ENCODE measurements at regions of chr15 and their contacts with region 1.

Region 1: DNA sequence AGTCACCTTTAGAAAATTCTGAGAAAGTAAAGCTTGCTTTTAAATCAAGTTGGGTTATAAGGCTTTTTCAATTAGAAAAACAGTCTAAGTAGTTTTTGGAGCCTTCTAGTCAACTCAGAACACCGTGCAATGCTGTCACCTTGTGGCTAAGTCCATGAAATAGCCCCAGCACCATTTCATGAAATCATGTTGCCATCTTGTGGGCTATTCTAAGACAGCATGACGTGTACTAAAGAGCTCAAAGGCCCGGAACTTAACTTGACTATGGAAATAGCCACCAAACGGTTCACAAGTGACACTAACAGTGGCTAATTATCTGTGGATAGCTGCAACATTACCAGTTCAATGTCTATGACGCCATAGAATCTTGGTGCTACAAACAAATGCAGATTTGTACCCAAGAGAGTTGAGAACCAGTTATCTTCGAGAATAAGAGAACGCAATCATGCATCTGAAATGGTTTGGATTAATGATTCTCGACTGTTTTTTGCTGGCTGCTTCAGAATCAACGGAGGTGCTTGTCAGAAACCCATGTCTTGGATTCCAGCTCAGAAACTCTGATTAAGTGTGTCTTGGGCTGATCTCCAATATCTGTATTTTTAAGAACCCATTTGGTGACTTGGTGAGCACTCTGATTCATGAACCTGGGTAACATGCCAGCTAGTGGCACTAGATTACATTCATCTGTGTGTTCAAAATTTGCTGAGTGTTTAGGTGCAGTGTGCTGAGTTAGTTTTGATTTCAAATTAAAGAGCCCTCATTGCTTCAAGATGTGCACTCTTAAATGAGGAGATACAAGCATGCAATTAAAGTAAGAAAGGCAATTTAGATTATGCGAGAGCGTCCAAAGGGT is 111.2 kb upstream of the MCTP2 start:
- DNase-seq: peak; percentile 90 to 94 (median 93)
- H3K4me3 ChIP-seq: no peak overlapping the region
- H3K27ac ChIP-seq: no peak overlapping the region
- H3K4me1 ChIP-seq: peaks cover 0 to 29% (median 12%) of the 10 kb centered on the region in 4 experiments
- H3K27me3 ChIP-seq: no peaks in the 10 kb centered on the region

Region 2: GRCh38 chr15:93030430-93031105 is 1089.6 kb before region 1 on chr15:
- CTCF ChIA-PET with region 1: interaction called, 62 read pairs
- POLR2A ChIA-PET with region 1: no interaction called
- DNase-seq: peak; percentile 61 to 71 (median 66)
- H3K4me3 ChIP-seq: peak overlapping the region in 1 of 7 experiments; percentile 45
- H3K27ac ChIP-seq: no peak overlapping the region
- H3K4me1 ChIP-seq: peaks cover 0 to 59% (median 17%) of the 10 kb centered on the region in 4 experiments
- H3K27me3 ChIP-seq: no peaks in the 10 kb centered on the region

Region 3: GRCh38 chr15:93035953-93036800 is 1084.0 kb before region 1 on chr15:
- CTCF ChIA-PET with region 1: interaction called, 62 read pairs
- POLR2A ChIA-PET with region 1: no interaction called
- DNase-seq: peak; percentile 74 to 87 (median 83)
- H3K4me3 ChIP-seq: peak overlapping the region in 1 of 7 experiments; percentile 16
- H3K27ac ChIP-seq: no peak overlapping the region
- H3K4me1 ChIP-seq: peaks cover 0 to 51% (median 12%) of the 10 kb centered on the region in 4 experiments
- H3K27me3 ChIP-seq: no peaks in the 10 kb centered on the region

Region 4: GRCh38 chr15:93087825-93088199 is 1032.3 kb before region 1 on chr15:
- CTCF ChIA-PET with region 1: interaction called, 17 read pairs
- POLR2A ChIA-PET with region 1: no interaction called
- DNase-seq: peak; percentile 75 to 88 (median 85)
- H3K4me3 ChIP-seq: peak overlapping the region in 3 of 7 experiments; percentile 30 to 73 (median 57)
- H3K27ac ChIP-seq: no peak overlapping the region
- H3K4me1 ChIP-seq: peaks cover 0 to 20% (median 14%) of the 10 kb centered on the region in 4 experiments
- H3K27me3 ChIP-seq: peaks cover 6 to 74% (median 25%) of the 10 kb centered on the region in 5 experiments

Region 5: DNA sequence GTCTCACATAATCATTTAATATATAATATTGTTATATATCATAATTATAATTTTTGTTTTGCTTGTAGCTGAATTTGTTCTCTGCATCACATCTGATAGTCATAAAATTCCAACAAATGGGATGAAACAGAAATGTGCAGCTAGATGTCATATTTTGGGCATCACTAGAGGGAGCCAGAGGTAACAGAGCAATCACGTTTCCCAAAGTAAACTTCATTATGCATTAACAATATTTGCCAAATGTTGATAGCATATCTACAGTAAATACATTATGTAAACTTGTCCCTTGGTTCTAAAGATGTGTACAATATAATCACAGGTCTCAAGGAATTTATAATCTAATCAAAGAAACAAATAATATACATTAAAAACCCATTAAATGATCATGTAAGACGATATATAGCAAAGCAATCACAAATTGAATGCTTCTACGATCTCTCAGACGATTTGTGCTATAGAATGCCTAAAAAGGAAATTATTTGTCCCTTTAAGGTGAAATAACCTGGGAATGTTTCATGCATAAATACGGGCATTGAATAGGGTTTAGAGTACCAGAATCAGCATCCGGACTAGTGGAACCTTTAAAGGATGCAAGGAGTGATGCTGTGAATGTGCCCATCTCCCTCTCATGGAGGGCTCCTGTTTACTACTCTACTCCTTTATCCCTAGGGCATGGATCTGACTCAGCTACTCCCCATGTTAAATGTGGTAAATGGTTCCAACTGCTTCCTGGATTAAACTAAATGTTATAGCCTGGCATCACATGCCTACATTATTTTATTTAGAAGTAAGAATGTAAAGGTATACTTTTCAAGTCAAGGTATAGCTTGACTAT is 122.8 kb before region 1 on chr15:
- CTCF ChIA-PET with region 1: interaction called, 10 read pairs
- POLR2A ChIA-PET with region 1: no interaction called
- DNase-seq: peak in 2 of 3 donors; percentile 15 to 17
- H3K4me3 ChIP-seq: no peak overlapping the region
- H3K27ac ChIP-seq: no peak overlapping the region
- H3K4me1 ChIP-seq: no peaks in the 10 kb centered on the region
- H3K27me3 ChIP-seq: peaks cover 0 to 2% (median 0%) of the 10 kb centered on the region in 5 experiments

Region 6: DNA sequence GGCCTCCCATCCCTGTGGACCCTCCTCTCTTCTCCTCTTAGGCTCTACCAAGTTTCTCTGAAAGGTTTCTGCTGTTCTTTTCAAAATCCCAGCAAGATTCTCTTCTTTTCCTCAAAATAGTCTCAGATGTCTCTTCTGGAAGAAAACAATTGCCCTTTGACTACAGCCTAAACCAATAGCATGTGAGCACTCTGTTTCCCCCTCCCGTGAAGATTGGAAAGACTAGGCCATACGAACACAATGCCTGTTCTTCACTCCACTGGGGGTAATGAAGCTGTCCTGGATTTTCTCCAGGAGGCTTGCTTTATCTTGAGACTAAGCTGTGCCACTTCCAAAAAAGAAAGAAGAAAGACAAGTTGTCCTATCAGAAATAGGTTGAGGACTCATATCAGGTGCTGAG is 67.4 kb before region 1 on chr15:
- CTCF ChIA-PET with region 1: no interaction called
- POLR2A ChIA-PET with region 1: no interaction called
- DNase-seq: no peak
- H3K4me3 ChIP-seq: no peak overlapping the region
- H3K27ac ChIP-seq: no peak overlapping the region
- H3K4me1 ChIP-seq: no peaks in the 10 kb centered on the region
- H3K27me3 ChIP-seq: no peaks in the 10 kb centered on the region

Region 7: DNA sequence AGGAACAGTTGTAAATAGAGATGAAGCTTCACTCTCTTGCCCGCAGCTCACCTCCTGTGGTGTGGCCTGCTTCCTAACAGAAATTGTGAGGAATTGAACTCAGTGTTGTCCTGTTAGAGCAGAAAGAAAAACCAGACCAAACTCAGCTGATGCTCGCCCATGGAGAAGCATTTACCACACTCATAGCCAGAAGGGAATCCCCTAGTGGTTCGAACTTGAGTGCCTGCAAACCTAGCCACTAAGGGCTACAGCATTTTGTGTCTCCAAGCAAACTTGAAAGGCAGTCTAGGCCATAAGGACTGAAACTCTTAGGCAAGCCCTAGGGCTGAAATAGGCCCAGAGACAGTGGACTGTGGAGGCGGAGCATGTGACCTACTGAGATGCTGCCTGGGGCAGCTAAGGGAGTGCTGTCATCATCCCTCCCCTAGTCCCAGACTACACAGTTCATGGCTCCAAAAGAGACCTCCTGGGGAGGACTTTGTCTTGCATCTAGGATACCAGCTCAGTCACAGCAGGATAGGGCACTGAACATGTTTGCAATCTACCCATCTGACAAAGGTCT is 66.7 kb after region 1 on chr15:
- CTCF ChIA-PET with region 1: no interaction called
- POLR2A ChIA-PET with region 1: no interaction called
- DNase-seq: no peak
- H3K4me3 ChIP-seq: no peak overlapping the region
- H3K27ac ChIP-seq: no peak overlapping the region
- H3K4me1 ChIP-seq: peaks cover 0 to 6% (median 2%) of the 10 kb centered on the region in 4 experiments
- H3K27me3 ChIP-seq: no peaks in the 10 kb centered on the region

Measured in common myeloid progenitor, CD34-positive (primary cell).